ENCODE measurements at regions of chr3 and their contacts with region 1.

Region 1: DNA sequence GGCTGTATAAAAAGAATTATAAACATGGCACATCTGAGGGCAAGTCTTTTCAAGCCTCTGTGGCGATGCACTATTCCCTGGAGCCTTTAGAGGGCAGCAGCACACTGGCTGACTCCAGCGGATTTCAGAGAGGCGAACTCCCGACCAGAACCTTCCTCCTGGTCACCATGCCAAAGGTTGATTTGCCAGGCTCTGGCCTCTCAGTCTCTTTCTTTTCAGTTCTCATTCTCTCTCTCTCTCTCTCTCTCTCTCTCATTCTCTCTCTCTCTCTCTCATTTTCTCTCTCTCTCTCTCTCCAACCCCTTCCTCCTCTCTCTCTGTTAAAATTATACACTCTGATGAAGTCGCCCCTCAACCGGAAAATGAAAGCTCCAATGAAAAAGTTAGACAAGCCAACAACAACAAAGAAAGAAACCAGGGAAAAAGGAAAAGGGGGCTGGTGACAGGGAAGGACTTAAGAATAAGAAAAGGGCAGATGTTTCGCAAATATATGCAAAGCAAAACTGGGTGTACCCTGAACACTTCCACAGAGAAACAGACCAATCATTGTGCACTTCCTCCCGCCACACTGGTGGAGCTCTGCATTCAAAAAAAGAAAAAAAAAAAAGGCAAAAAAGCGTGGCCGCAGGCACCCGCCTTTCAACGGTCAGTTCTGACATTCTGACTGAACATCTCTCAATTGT is 90.2 kb downstream of the TIGIT start:
- DNase-seq: peak; percentile 78 to 98 (median 88)

Region 2: GRCh38 chr3:114213627-114214541 is 170.1 kb before region 1 on chr3:
- intact Hi-C with region 1: no loop called
- DNase-seq: peak in 1 of 10 donors; percentile 16

Region 3: DNA sequence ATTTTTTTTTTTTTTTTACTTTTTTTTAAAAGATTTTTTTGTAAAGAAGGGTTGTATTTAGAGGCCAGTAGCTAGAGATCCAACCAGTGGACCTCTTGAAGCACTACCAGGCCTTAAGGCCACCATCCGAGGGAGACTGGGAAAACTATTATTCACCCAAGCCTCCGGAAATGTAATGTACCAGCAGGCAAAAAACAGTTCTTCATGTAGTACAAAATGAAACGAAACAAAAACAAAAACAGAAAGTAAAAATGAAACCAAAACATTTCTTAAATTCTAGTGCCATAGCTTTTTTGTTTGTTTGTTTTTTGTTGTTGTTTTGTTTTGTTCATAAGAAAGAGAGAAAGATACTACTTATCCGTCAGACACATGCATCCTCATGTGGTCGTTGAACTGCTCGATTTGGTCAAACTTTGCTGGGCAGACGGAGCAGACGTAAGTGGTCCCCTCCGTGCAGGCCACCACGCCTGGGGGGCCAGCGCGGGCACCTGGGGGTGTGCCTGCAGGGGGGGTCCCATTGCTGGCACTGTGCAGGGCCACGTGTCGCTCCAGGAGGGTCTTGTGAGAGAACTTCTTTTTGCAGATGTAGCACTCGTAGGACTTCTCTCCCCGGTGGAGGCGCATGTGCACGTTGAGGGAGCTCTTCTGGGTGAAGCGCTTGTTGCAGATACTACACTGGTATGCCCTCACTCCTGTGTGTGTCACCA is 45.2 kb before region 1 on chr3:
- intact Hi-C with region 1: no loop called
- DNase-seq: peak in 2 of 10 donors; percentile 56 to 58

Region 4: GRCh38 chr3:114454551-114455251 is 70.7 kb after region 1 on chr3:
- intact Hi-C with region 1: loop called (anchors 5 kb)
- DNase-seq: peak in 2 of 10 donors; percentile 41 to 84

Measured in posterior cingulate gyrus (tissue), 11 donors.